T-cell (primary cell): ENCODE measurements at regions of chr16 and their contacts with region 1.

Region 1: GRCh38 chr16:22190776-22191531 is 15.1 kb upstream of the EEF2K start:
- DNase-seq: peak; percentile 95 to 100 (median 99)
- ATAC-seq: peak; percentile 59 to 67 (median 65)
- H3K4me3 ChIP-seq: peak overlapping the region; percentile 52 to 79
- H3K4me3 Mint-ChIP-seq: peak overlapping the region; percentile 83 to 91 (median 84)
- H3K27ac ChIP-seq: peak overlapping the region; percentile 99
- H3K27ac Mint-ChIP-seq: peak overlapping the region; percentile 99 to 100
- H3K4me1 ChIP-seq: peaks cover 32 to 76% of the 10 kb centered on the region in 2 experiments
- H3K4me1 Mint-ChIP-seq: peaks cover 59 to 67% (median 64%) of the 10 kb centered on the region in 3 donors
- H3K27me3 ChIP-seq: no peaks in the 10 kb centered on the region
- H3K27me3 Mint-ChIP-seq: peaks cover 0 to 5% of the 10 kb centered on the region in 2 donors

Region 2: GRCh38 chr16:21684199-21684598 is 506.8 kb before region 1 on chr16:
- CTCF ChIA-PET with region 1: no interaction called
- POLR2A ChIA-PET with region 1: no interaction called
- DNase-seq: peak in 21 of 35 experiments; percentile 0 to 57 (median 17)
- ATAC-seq: no peak
- H3K4me3 ChIP-seq: no peak overlapping the region
- H3K4me3 Mint-ChIP-seq: no peak overlapping the region
- H3K27ac ChIP-seq: no peak overlapping the region
- H3K27ac Mint-ChIP-seq: no peak overlapping the region
- H3K4me1 ChIP-seq: peaks cover 0 to 2% of the 10 kb centered on the region in 2 experiments
- H3K4me1 Mint-ChIP-seq: peaks cover 0 to 4% (median 0%) of the 10 kb centered on the region in 3 donors
- H3K27me3 ChIP-seq: peaks cover 0 to 15% of the 10 kb centered on the region in 2 experiments
- H3K27me3 Mint-ChIP-seq: peaks cover 0 to 7% of the 10 kb centered on the region in 2 donors

Region 3: DNA sequence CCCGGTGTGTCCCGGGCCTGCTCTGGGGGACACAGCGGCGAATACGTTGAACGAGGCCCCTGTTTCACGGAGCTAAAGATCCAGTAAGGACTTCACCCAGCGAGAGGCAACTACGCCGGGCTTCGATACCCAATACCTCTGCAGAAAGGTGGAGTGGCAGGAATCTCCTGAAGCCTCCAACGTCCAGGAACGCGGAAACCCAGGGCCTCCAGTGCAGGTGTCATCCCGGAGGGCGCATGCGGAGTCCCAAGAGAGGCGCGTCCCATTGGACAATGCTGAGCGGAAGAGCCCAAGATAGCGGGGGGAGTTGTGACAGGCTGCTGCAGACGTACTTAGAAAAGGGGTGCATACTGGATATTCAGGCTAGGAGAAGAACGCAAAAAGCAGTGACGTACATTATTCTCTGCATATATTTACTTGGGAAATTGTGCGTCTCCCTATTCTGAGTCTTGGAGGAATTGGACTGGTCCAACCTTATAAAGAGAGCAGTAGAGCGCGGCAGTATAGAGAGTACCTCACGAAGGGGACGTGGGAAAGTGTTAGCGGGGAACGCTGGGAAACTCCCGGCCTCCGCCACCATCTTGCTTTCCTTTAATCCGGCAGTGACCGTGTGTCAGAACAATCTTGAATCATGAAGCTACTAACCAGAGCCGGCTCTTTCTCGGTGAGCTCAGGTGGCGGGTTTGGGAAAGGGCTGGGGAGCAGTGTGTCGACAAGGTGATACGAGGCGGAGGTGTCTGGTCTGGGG is 238.0 kb before region 1 on chr16 and contains the start of gene UQCRC2:
- CTCF ChIA-PET with region 1: interaction called, 12 to 14 read pairs
- POLR2A ChIA-PET with region 1: interaction called, 4 to 5 read pairs
- DNase-seq: peak; percentile 75 to 94 (median 84)
- ATAC-seq: peak; percentile 91 to 95 (median 92)
- H3K4me3 ChIP-seq: peak within 1 kb of the TSS; percentile 95 to 98
- H3K4me3 Mint-ChIP-seq: peak within 1 kb of the TSS; percentile 97 to 99 (median 99)
- H3K27ac ChIP-seq: peak within 1 kb of the TSS; percentile 98
- H3K27ac Mint-ChIP-seq: peak within 1 kb of the TSS; percentile 98 to 100
- H3K4me1 ChIP-seq: peaks cover 28 to 34% of the 10 kb centered on the region in 2 experiments
- H3K4me1 Mint-ChIP-seq: peaks cover 52 to 72% (median 69%) of the 10 kb centered on the region in 3 donors
- H3K27me3 ChIP-seq: no peaks in the 10 kb centered on the region
- H3K27me3 Mint-ChIP-seq: no peaks in the 10 kb centered on the region
- total RNA-seq, gene UQCRC2: 142 to 201 (median 165) TPM

Region 4: GRCh38 chr16:22001591-22001990 is 189.4 kb before region 1 on chr16:
- CTCF ChIA-PET with region 1: interaction called, 8 to 28 read pairs
- POLR2A ChIA-PET with region 1: interaction called, 4 to 6 read pairs
- DNase-seq: peak in 1 of 35 experiments; percentile 8
- ATAC-seq: no peak
- H3K4me3 ChIP-seq: no peak overlapping the region
- H3K4me3 Mint-ChIP-seq: peak overlapping the region in 1 of 3 donors; percentile 53
- H3K27ac ChIP-seq: no peak overlapping the region
- H3K27ac Mint-ChIP-seq: no peak overlapping the region
- H3K4me1 ChIP-seq: peaks cover 0 to 7% of the 10 kb centered on the region in 2 experiments
- H3K4me1 Mint-ChIP-seq: peaks cover 10 to 14% (median 11%) of the 10 kb centered on the region in 3 donors
- H3K27me3 ChIP-seq: peaks cover 0 to 9% of the 10 kb centered on the region in 2 experiments
- H3K27me3 Mint-ChIP-seq: peaks cover 0 to 2% of the 10 kb centered on the region in 2 donors

Region 5: DNA sequence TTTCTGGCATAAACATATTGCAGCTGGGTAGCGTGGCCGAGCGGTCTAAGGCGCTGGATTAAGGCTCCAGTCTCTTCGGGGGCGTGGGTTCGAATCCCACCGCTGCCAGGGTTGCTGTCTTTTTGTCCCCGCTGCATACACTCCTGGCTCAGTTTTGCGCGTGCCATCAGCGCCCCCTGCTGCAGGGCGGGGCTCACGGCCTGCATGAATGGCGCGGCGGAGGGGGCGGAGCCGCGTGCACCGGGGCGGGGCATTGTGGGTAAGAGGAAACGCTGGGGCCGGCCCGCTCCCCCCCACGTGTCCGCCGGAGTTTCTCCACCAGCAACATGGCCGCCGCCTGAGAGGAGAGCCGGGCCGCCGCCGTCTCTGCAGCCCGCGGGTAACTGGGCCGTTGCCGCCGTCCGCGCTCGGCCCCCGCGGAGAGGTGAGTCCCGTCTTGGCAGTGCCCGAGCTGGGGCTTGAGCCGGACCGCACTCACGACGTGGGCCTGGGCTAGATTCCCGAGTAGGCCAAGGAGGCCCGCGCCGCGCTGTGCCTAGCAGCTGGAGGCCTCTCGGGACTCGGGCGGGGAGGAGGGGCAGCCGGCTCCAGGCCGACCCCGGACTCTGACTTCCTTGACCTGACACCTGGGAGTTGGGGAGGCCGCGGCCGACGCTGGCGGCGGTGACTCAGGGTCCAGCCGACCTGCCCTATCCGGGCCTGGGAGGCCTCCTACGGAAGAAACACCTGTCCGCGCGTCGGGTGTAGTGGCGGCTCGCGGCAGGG is 106.3 kb after region 1 on chr16 and contains the start of gene POLR3E:
- CTCF ChIA-PET with region 1: interaction called in 1 of 2 experiments, 23 read pairs
- POLR2A ChIA-PET with region 1: interaction called in 1 of 2 experiments, 27 read pairs
- DNase-seq: peak; percentile 96 to 100 (median 100)
- ATAC-seq: peak; percentile 75 to 94 (median 91)
- H3K4me3 ChIP-seq: peak within 1 kb of the TSS; percentile 88 to 92
- H3K4me3 Mint-ChIP-seq: peak within 1 kb of the TSS; percentile 94 to 95 (median 94)
- H3K27ac ChIP-seq: peak within 1 kb of the TSS; percentile 96
- H3K27ac Mint-ChIP-seq: peak within 1 kb of the TSS; percentile 94 to 96
- H3K4me1 ChIP-seq: peaks cover 10 to 45% of the 10 kb centered on the region in 2 experiments
- H3K4me1 Mint-ChIP-seq: peaks cover 46 to 49% (median 48%) of the 10 kb centered on the region in 3 donors
- H3K27me3 ChIP-seq: peaks cover 0 to 5% of the 10 kb centered on the region in 2 experiments
- H3K27me3 Mint-ChIP-seq: peaks cover 0 to 4% of the 10 kb centered on the region in 2 donors
- total RNA-seq, gene POLR3E: 79.3 to 174 (median 99.7) TPM